A549 (cell line): ENCODE measurements at regions of chr16 and their contacts with region 1.

Region 1: GRCh38 chr16:90081606-90081970 is 4.5 kb upstream of the PRDM7 start:
- DNase-seq: no peak
- ATAC-seq: peak in 1 of 2 experiments; percentile 13; a peak in 3 of 6 replicates
- H3K4me3 ChIP-seq: no peak overlapping the region; the same call in 2 of the 3 replicates
- H3K27ac ChIP-seq: no peak overlapping the region
- H3K4me1 ChIP-seq: peaks cover 4% of the 10 kb centered on the region
- CTCF ChIP-seq: no peak
- EP300 ChIP-seq: no peak
- POLR2A ChIP-seq: no peak
- RAD21 ChIP-seq: no peak

Region 2: DNA sequence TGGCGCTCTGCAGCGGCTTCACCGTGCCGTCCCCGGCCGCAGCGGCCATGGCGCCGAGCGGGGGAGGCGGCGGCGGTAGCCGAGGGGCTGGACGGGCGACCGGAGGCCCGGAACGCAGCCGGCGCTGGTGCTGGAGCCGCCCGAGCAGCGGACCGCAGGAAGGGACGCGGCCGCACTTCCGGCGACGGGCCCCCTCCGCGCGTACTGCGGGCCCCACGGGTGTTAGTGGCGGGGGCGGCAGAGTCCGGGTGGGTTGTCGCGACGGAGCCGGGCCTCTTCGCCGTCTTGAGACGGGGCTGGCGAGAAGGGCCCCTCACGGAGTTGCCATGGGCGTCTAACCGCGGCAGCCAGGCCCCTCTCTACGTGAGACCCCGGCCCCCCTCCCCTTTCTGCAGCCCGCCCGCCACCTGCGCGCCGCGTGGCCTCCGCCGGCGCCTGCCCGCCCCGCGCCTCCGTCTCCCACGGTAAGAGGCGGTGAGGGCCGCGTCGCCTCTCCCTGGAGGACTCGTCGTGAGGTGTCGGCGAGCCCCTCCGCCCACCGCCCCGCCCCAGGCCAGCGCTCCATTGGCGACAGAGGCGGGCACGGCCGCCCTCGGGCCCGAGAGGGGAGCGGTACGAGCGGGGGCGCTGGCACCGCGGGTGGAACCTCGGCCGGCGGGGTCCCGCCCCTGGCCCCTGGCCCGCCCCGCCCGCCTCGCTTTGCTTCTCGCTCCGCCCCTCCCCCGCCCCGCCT is 360.6 kb before region 1 on chr16 and contains the starts of genes VPS9D1 and ZNF276:
- CTCF ChIA-PET with region 1: no interaction called
- POLR2A ChIA-PET with region 1: no interaction called
- DNase-seq: peak; percentile 66 to 85
- ATAC-seq: peak; percentile 70 to 74
- H3K4me3 ChIP-seq: peak within 1 kb of the TSS; percentile 94
- H3K27ac ChIP-seq: peak within 1 kb of the TSS; percentile 96 to 99
- H3K4me1 ChIP-seq: peaks cover 32% of the 10 kb centered on the region
- CTCF ChIP-seq: no peak
- EP300 ChIP-seq: no peak
- POLR2A ChIP-seq: peak; percentile 58
- RAD21 ChIP-seq: no peak
- polyA plus RNA-seq, gene VPS9D1: 2.1 and 2.7 TPM in 2 replicates
- polyA plus RNA-seq, gene ZNF276: 6.5 and 7.5 TPM in 2 replicates

Region 3: GRCh38 chr16:89958068-89958467 is 123.5 kb before region 1 on chr16:
- CTCF ChIA-PET with region 1: no interaction called
- POLR2A ChIA-PET with region 1: no interaction called
- DNase-seq: peak; percentile 58 to 66
- ATAC-seq: peak; percentile 44 to 94; a peak in 3 of 6 replicates
- H3K4me3 ChIP-seq: no peak overlapping the region
- H3K27ac ChIP-seq: no peak overlapping the region
- H3K4me1 ChIP-seq: no peaks in the 10 kb centered on the region
- CTCF ChIP-seq: no peak
- EP300 ChIP-seq: no peak
- POLR2A ChIP-seq: no peak
- RAD21 ChIP-seq: no peak

Region 4: GRCh38 chr16:89990797-89991196 is 90.8 kb before region 1 on chr16:
- CTCF ChIA-PET with region 1: no interaction called
- POLR2A ChIA-PET with region 1: no interaction called
- DNase-seq: no peak
- ATAC-seq: no peak
- H3K4me3 ChIP-seq: no peak overlapping the region
- H3K27ac ChIP-seq: no peak overlapping the region
- H3K4me1 ChIP-seq: no peaks in the 10 kb centered on the region
- CTCF ChIP-seq: no peak
- EP300 ChIP-seq: no peak
- POLR2A ChIP-seq: no peak
- RAD21 ChIP-seq: no peak

Region 5: DNA sequence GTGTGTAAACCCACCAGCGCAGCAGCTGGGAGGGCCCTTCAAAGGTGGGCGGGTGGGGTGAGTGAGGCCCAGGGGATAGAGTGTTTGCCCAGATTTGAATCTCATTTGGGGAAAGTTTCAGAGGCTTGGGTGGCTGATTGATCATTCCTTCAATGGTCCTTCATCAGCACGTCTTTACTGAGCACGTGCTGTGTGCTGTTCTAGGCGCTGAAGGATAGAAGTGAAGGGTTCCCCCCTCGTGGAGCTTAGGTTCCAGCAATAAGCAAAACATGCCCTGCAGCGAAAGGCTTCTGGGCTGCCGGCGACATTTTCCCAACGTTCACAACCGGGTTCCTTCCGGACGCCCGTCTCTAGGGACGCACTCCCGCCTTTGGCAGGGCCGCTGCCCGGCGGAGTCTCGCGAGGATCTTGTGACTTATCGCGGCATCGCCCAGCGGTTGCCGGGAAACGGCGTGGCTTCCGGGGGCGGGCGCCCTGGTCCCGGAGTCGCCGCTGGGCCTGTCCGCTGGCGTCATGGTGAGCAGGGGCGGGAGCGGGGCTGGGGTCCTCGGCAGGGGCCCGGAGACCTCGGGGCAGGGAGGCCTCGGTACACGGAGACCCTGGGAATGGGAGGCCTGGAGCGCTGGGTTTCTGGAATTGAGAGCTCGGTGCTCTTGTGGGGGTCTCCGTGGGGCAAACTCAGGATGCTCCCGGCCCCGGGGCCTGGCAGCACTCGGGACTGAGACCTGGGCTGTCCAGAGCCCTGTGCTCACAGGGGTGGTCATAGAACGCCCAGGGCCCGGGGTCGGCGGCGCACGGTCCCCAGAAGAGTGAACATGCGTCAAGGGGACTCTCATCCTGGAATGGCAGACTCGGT is 59.2 kb before region 1 on chr16:
- CTCF ChIA-PET with region 1: interaction called, 15 read pairs
- POLR2A ChIA-PET with region 1: interaction called, 3 read pairs
- DNase-seq: peak; percentile 90 to 91
- ATAC-seq: peak; percentile 69 to 87
- H3K4me3 ChIP-seq: peak overlapping the region; percentile 76
- H3K27ac ChIP-seq: peak overlapping the region; percentile 88 to 98
- H3K4me1 ChIP-seq: peaks cover 34% of the 10 kb centered on the region
- CTCF ChIP-seq: no peak
- EP300 ChIP-seq: no peak
- POLR2A ChIP-seq: peak; percentile 70
- RAD21 ChIP-seq: no peak

Region 6: GRCh38 chr16:90046971-90047713 is 34.4 kb before region 1 on chr16:
- CTCF ChIA-PET with region 1: interaction called, 25 read pairs
- POLR2A ChIA-PET with region 1: interaction called, 3 read pairs
- DNase-seq: no peak
- ATAC-seq: peak; percentile 37 to 66
- H3K4me3 ChIP-seq: peak overlapping the region; percentile 72
- H3K27ac ChIP-seq: peak overlapping the region; percentile 83 to 92
- H3K4me1 ChIP-seq: peaks cover 27% of the 10 kb centered on the region
- CTCF ChIP-seq: no peak
- EP300 ChIP-seq: no peak
- POLR2A ChIP-seq: no peak
- RAD21 ChIP-seq: no peak

Region 7: GRCh38 chr16:90053902-90054500 is 27.6 kb before region 1 on chr16:
- CTCF ChIA-PET with region 1: interaction called, 12 read pairs
- POLR2A ChIA-PET with region 1: interaction called, 3 read pairs
- DNase-seq: no peak
- ATAC-seq: no peak
- H3K4me3 ChIP-seq: no peak overlapping the region
- H3K27ac ChIP-seq: no peak overlapping the region
- H3K4me1 ChIP-seq: peaks cover 8% of the 10 kb centered on the region; the same call in 1 of the 3 replicates
- CTCF ChIP-seq: no peak
- EP300 ChIP-seq: no peak
- POLR2A ChIP-seq: no peak
- RAD21 ChIP-seq: no peak

Region 8: GRCh38 chr16:90061437-90061836 is 20.2 kb before region 1 on chr16:
- CTCF ChIA-PET with region 1: interaction called, 29 read pairs
- POLR2A ChIA-PET with region 1: no interaction called
- DNase-seq: no peak
- ATAC-seq: no peak
- H3K4me3 ChIP-seq: no peak overlapping the region
- H3K27ac ChIP-seq: no peak overlapping the region
- H3K4me1 ChIP-seq: peaks cover 8% of the 10 kb centered on the region; the same call in 1 of the 3 replicates
- CTCF ChIP-seq: no peak
- EP300 ChIP-seq: no peak
- POLR2A ChIP-seq: no peak
- RAD21 ChIP-seq: no peak

Region 9: GRCh38 chr16:90070440-90070839 is 11.1 kb before region 1 on chr16:
- CTCF ChIA-PET with region 1: interaction called, 29 read pairs
- POLR2A ChIA-PET with region 1: no interaction called
- DNase-seq: no peak
- ATAC-seq: no peak
- H3K4me3 ChIP-seq: no peak overlapping the region
- H3K27ac ChIP-seq: no peak overlapping the region
- H3K4me1 ChIP-seq: no peaks in the 10 kb centered on the region
- CTCF ChIP-seq: no peak
- EP300 ChIP-seq: no peak
- POLR2A ChIP-seq: no peak
- RAD21 ChIP-seq: no peak